A549 (cell line): ENCODE measurements at regions of chr2 and their contacts with region 1.

Region 1: GRCh38 chr2:17309741-17310339 is 208.4 kb downstream of the RAD51AP2 start:
- DNase-seq: peak; percentile 51 to 81
- ATAC-seq: peak; percentile 88 to 97
- H3K4me3 ChIP-seq: no peak overlapping the region
- H3K27ac ChIP-seq: no peak overlapping the region
- H3K4me1 ChIP-seq: peaks cover 15% of the 10 kb centered on the region
- CTCF ChIP-seq: peak; percentile 76
- EP300 ChIP-seq: no peak
- POLR2A ChIP-seq: no peak
- RAD21 ChIP-seq: peak; percentile 63 to 70

Region 2: DNA sequence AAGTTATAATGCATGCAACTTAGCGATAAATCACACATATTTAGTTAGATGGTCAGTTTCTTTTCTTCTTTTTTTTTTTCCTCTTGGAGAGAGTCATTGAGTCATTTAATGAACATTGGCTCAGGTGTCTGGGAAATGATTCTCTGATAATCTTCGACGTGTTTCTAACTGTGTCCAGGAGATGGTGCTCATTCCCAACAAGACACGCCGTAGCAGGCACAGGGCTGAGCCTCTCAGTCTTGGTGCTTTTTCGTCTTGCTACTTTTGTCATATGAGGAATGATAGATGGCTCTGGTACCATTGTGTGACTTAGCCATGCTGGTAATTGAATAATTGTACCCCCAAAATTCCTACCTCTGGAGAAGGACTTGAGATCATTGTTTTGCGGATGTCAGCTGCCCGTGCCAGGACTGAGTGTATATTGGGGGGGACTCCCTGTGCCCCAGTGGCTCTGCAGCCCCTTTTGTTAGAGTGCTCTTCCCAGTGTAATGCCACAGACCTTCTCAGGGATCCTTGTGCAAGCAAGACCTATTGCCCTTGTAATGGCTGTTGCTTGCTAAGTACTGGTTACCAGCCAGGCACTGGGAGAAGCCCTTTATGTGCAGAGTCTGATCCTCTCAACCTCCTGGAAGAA is 536.6 kb before region 1 on chr2:
- CTCF ChIA-PET with region 1: interaction called, 31 read pairs
- POLR2A ChIA-PET with region 1: no interaction called
- DNase-seq: peak; percentile 31 to 63
- ATAC-seq: peak; percentile 76 to 91; a peak in 5 of 6 replicates
- H3K4me3 ChIP-seq: no peak overlapping the region
- H3K27ac ChIP-seq: no peak overlapping the region
- H3K4me1 ChIP-seq: no peaks in the 10 kb centered on the region
- CTCF ChIP-seq: peak; percentile 82
- EP300 ChIP-seq: no peak
- POLR2A ChIP-seq: no peak
- RAD21 ChIP-seq: peak; percentile 83 to 90

Region 3: GRCh38 chr2:17328161-17328560 is 18.3 kb after region 1 on chr2:
- CTCF ChIA-PET with region 1: interaction called, 47 read pairs
- POLR2A ChIA-PET with region 1: no interaction called
- DNase-seq: no peak
- ATAC-seq: no peak
- H3K4me3 ChIP-seq: no peak overlapping the region
- H3K27ac ChIP-seq: no peak overlapping the region
- H3K4me1 ChIP-seq: no peaks in the 10 kb centered on the region
- CTCF ChIP-seq: no peak
- EP300 ChIP-seq: no peak
- POLR2A ChIP-seq: no peak
- RAD21 ChIP-seq: no peak